Activated naive CD4-positive, alpha-beta T cell treated with anti-CD3 and anti-CD28 coated beads, Interleukin-2, amount 10 ng/mL, durations not matched to agents 7 days and 5 days (primary cell): ENCODE measurements at regions of chr6 and their contacts with region 1.

Region 1: GRCh38 chr6:36578431-36578830 is 15.7 kb upstream of the SRSF3 start:
- DNase-seq: no peak
- H3K4me3 Mint-ChIP-seq: no peak overlapping the region
- H3K27ac Mint-ChIP-seq: no peak overlapping the region
- H3K4me1 Mint-ChIP-seq: peaks cover 13% of the 10 kb centered on the region
- H3K27me3 Mint-ChIP-seq: peaks cover 5% of the 10 kb centered on the region

Region 2: DNA sequence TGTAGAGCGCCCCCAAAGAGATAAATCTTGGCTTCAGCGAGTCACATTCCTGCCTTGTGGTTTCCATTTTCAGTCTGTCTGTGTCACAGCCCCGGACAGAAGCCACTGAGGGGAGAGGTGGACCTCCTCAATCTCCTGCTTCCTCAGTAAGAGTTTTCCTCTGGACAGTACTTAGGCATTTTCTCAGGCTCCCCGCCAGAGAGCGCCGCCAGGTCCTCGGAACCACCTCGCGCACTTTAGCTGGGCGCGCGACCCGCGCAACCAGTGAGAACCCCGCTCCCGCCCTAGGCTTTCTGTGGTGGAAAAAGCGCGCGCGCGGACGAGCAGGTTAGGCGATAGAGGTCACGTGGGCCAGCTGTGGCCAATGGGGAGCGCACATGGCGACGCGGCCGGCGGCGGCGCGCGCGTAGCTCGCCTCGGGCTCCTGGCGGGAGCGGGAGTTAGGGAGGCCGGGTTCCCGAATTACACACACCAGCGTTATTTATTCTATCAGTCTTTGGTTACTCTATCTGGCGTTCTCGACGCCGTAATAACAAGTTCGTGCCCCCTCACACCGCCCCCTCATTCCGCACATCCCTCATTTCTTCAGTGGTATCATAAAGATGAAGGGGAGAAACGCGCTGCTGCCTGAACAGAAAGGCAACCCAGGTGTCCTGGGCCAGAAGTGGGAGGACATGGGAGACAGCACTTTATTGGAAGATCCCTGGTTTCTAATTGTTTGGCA is 155.2 kb before region 1 on chr6:
- CTCF ChIA-PET with region 1: interaction called, 20 read pairs
- DNase-seq: peak; percentile 99
- H3K4me3 Mint-ChIP-seq: peak overlapping the region; percentile 84
- H3K27ac Mint-ChIP-seq: peak overlapping the region; percentile 88
- H3K4me1 Mint-ChIP-seq: peaks cover 22% of the 10 kb centered on the region
- H3K27me3 Mint-ChIP-seq: peaks cover 21% of the 10 kb centered on the region

Region 3: GRCh38 chr6:36592221-36592655 is 13.8 kb after region 1 on chr6:
- CTCF ChIA-PET with region 1: no interaction called
- DNase-seq: peak; percentile 26
- H3K4me3 Mint-ChIP-seq: peak overlapping the region; percentile 63
- H3K27ac Mint-ChIP-seq: peak overlapping the region; percentile 90
- H3K4me1 Mint-ChIP-seq: peaks cover 28% of the 10 kb centered on the region
- H3K27me3 Mint-ChIP-seq: peaks cover 21% of the 10 kb centered on the region